ENCODE measurements at regions of chr4 and their contacts with region 1.

Region 1: DNA sequence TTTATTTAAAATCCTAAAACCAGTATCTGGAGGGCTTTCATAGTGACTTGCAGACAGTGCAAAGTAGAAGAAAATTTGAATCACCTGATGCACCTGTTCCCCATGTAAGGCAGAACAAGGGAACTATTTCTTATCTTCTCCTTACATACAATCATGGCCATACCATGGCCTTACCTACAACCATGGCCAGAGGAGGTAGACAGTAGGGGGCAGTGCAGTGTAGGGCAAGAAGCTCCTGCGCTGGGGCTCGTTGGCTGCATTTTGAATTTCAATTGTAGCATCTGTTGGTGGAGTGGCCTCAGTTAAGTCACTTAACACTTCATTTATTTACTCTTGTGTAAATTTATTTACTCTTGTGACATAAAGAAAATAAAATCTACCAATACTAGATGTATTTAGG is 33.0 kb downstream of the GALNTL6 start:
- DNase-seq: no peak
- ATAC-seq: no peak
- H3K4me3 ChIP-seq: no peak overlapping the region
- H3K27ac ChIP-seq: no peak overlapping the region
- H3K4me1 ChIP-seq: no peaks in the 10 kb centered on the region
- H3K27me3 ChIP-seq: no peaks in the 10 kb centered on the region

Region 2: DNA sequence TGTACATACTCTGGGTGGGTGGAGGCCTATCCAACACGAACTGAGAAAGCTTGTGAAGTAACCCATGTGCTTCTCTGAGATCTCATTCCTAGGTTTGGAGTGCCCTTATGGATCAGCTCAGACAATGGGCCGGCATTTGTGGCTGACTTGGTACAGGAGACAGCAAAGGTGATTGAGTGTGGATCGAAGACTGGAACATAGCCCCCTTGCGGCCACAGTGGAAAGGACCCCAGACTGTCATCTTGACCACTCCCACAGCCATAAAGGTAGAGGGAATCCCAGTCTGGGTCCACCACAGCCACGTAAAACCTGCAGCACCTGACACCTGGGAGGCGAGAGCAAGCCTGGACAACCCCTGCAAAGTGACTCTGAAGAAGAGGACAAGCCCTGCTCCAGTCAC is 1158.5 kb before region 1 on chr4:
- intact Hi-C with region 1: loop called in 1 of 4 experiments (anchors 10 kb)
- DNase-seq: no peak
- ATAC-seq: no peak
- H3K4me3 ChIP-seq: no peak overlapping the region
- H3K27ac ChIP-seq: no peak overlapping the region
- H3K4me1 ChIP-seq: no peaks in the 10 kb centered on the region
- H3K27me3 ChIP-seq: no peaks in the 10 kb centered on the region

Region 3: GRCh38 chr4:171966356-171966755 is 120.1 kb after region 1 on chr4:
- intact Hi-C with region 1: no loop called
- DNase-seq: no peak
- ATAC-seq: no peak
- H3K4me3 ChIP-seq: no peak overlapping the region
- H3K27ac ChIP-seq: no peak overlapping the region
- H3K4me1 ChIP-seq: no peaks in the 10 kb centered on the region
- H3K27me3 ChIP-seq: no peaks in the 10 kb centered on the region